A673 (cell line): ENCODE measurements at regions of chr4 and their contacts with region 1.

Region 1: DNA sequence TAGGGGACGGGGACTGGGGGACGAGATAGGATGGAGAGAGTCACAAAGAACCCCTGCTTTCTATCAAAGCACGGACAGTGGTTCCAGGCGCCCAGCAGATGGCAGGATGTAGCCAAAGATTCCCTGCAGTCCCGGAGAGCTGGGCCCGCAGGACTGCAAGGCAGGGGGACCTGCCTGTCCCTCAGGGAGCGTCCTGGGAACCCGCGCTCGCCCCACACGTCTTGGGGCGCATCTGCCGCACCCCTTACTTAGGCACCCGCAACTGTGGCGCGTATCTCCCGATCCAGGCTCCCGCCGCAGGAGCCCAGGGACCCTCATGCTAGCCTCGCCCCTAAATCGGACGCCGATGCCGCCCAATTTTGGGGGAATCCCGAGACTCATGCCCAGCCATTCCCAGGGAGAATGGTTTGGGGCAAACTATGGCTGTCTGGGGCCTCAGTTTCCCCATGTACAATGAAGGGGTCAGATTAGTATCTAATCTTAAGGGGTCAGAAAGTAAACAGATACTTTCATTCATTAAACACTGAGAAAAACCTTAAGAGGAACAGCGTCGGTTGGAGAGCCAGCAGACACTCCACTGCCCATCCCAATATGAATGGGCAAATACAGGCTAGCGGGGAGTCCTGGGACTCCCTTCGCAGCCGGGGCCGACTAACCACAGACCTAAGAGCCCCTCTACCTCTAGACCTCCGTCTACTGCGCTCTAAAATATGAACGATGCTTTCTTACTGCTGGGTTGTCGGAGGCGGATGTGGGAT is 581 bp upstream of the STK32B start:
- DNase-seq: peak; percentile 91
- H3K4me3 ChIP-seq: peak overlapping the region; percentile 62
- H3K27ac ChIP-seq: peak overlapping the region; percentile 49
- H3K4me1 ChIP-seq: peaks cover 5% of the 10 kb centered on the region
- H3K27me3 ChIP-seq: peaks cover 5% of the 10 kb centered on the region
- CTCF ChIP-seq: peak; percentile 87

Region 2: DNA sequence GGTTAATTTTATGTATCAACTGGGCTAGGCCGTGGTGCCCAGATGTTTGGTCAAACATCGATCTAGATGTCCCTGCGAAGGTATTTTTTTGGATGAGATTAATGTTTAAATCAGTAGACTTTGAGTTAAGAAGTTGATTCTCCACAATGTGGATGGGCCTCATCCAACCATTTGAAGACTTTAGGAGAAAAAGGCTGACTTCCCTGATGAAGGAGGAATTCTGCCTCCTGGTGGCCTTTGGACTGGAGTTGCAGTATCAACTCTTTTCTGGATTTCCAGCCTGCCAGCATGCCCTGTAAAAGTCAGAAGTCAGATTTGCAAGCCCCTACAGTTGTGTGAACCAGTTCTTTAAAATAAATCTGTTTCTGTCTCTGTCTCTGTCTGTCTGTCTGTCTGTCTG is 92.0 kb after region 1 on chr4:
- CTCF ChIA-PET with region 1: no interaction called
- POLR2A ChIA-PET with region 1: no interaction called
- intact Hi-C with region 1: loop called (anchors 5 kb)
- DNase-seq: peak; percentile 67
- H3K4me3 ChIP-seq: no peak overlapping the region
- H3K27ac ChIP-seq: no peak overlapping the region
- H3K4me1 ChIP-seq: no peaks in the 10 kb centered on the region
- H3K27me3 ChIP-seq: no peaks in the 10 kb centered on the region
- CTCF ChIP-seq: peak; percentile 64

Region 3: GRCh38 chr4:5378002-5378401 is 327.3 kb after region 1 on chr4:
- CTCF ChIA-PET with region 1: interaction called, 3 read pairs
- POLR2A ChIA-PET with region 1: no interaction called
- intact Hi-C with region 1: loop called (anchors 1 kb)
- DNase-seq: peak; percentile 62
- H3K4me3 ChIP-seq: no peak overlapping the region
- H3K27ac ChIP-seq: no peak overlapping the region
- H3K4me1 ChIP-seq: no peaks in the 10 kb centered on the region
- H3K27me3 ChIP-seq: no peaks in the 10 kb centered on the region
- CTCF ChIP-seq: peak; percentile 58

Region 4: DNA sequence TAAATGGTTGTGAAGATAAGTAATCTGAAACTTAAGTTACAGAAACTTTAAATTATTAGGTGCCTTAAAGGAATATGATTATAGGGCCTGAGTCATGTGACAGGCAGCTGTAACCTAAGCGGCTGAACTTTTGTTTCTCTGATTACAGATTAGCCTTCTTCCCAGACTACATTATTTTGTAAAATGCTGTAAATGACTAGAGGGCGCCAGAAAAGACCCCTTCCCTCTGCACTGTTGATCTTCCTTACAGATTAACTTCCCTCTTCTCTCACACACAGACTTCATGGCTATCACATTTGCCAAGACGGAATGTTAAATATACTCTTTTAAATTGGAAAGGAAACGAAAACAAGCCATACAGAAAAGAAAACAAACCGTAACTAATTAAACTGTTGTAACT is 561.1 kb after region 1 on chr4:
- CTCF ChIA-PET with region 1: no interaction called
- POLR2A ChIA-PET with region 1: no interaction called
- intact Hi-C with region 1: loop called (anchors 5 kb)
- DNase-seq: peak; percentile 63
- H3K4me3 ChIP-seq: no peak overlapping the region
- H3K27ac ChIP-seq: no peak overlapping the region
- H3K4me1 ChIP-seq: peaks cover 4% of the 10 kb centered on the region
- H3K27me3 ChIP-seq: no peaks in the 10 kb centered on the region
- CTCF ChIP-seq: peak; percentile 41; the same call in 1 of the 2 replicates

Region 5: GRCh38 chr4:5812506-5813229 is 762.0 kb after region 1 on chr4:
- CTCF ChIA-PET with region 1: no interaction called
- POLR2A ChIA-PET with region 1: interaction called, 4 read pairs
- intact Hi-C with region 1: loop called (anchors 2 kb)
- DNase-seq: peak; percentile 85
- H3K4me3 ChIP-seq: no peak overlapping the region
- H3K27ac ChIP-seq: no peak overlapping the region
- H3K4me1 ChIP-seq: peaks cover 12% of the 10 kb centered on the region
- H3K27me3 ChIP-seq: no peaks in the 10 kb centered on the region
- CTCF ChIP-seq: peak; percentile 72